ENCODE measurements at regions of chr11 and their contacts with region 1.

Region 1: GRCh38 chr11:102560555-102561011 is 30.0 kb upstream of the MMP7 start:
- DNase-seq: peak; percentile 70
- ATAC-seq: peak; percentile 53
- H3K4me3 ChIP-seq: peak overlapping the region in 4 of 5 experiments; percentile 30 to 67 (median 40)
- H3K4me3 Mint-ChIP-seq: peak overlapping the region; percentile 88
- H3K27ac ChIP-seq: peak overlapping the region; percentile 87 to 96
- H3K27ac Mint-ChIP-seq: peak overlapping the region; percentile 89
- H3K4me1 ChIP-seq: peaks cover 53 to 56% of the 10 kb centered on the region in 2 donors
- H3K4me1 Mint-ChIP-seq: peaks cover 54% of the 10 kb centered on the region
- H3K27me3 ChIP-seq: no peaks in the 10 kb centered on the region
- H3K27me3 Mint-ChIP-seq: no peaks in the 10 kb centered on the region
- CTCF ChIP-seq: no peak

Region 2: GRCh38 chr11:102592634-102593581 is 32.3 kb after region 1 on chr11:
- CTCF ChIA-PET with region 1: interaction called, 4 read pairs
- POLR2A ChIA-PET with region 1: no interaction called
- intact Hi-C with region 1: loop called (anchors 5 kb)
- DNase-seq: no peak
- ATAC-seq: no peak
- H3K4me3 ChIP-seq: no peak overlapping the region
- H3K4me3 Mint-ChIP-seq: no peak overlapping the region
- H3K27ac ChIP-seq: no peak overlapping the region
- H3K27ac Mint-ChIP-seq: no peak overlapping the region
- H3K4me1 ChIP-seq: peaks cover 26 to 29% of the 10 kb centered on the region in 2 donors
- H3K4me1 Mint-ChIP-seq: peaks cover 35% of the 10 kb centered on the region
- H3K27me3 ChIP-seq: no peaks in the 10 kb centered on the region
- H3K27me3 Mint-ChIP-seq: no peaks in the 10 kb centered on the region
- CTCF ChIP-seq: peak; percentile 55

Region 3: GRCh38 chr11:102603091-102603490 is 42.5 kb after region 1 on chr11:
- CTCF ChIA-PET with region 1: interaction called, 3 read pairs
- POLR2A ChIA-PET with region 1: no interaction called
- intact Hi-C with region 1: loop called (anchors 2 kb)
- DNase-seq: no peak
- ATAC-seq: no peak
- H3K4me3 ChIP-seq: no peak overlapping the region
- H3K4me3 Mint-ChIP-seq: no peak overlapping the region
- H3K27ac ChIP-seq: no peak overlapping the region
- H3K27ac Mint-ChIP-seq: no peak overlapping the region
- H3K4me1 ChIP-seq: no peaks in the 10 kb centered on the region
- H3K4me1 Mint-ChIP-seq: peaks cover 14% of the 10 kb centered on the region
- H3K27me3 ChIP-seq: no peaks in the 10 kb centered on the region
- H3K27me3 Mint-ChIP-seq: no peaks in the 10 kb centered on the region
- CTCF ChIP-seq: no peak

Region 4: GRCh38 chr11:102776454-102776853 is 215.9 kb after region 1 on chr11:
- CTCF ChIA-PET with region 1: no interaction called
- POLR2A ChIA-PET with region 1: no interaction called
- intact Hi-C with region 1: no loop called
- DNase-seq: no peak
- ATAC-seq: no peak
- H3K4me3 ChIP-seq: no peak overlapping the region
- H3K4me3 Mint-ChIP-seq: no peak overlapping the region
- H3K27ac ChIP-seq: no peak overlapping the region
- H3K27ac Mint-ChIP-seq: no peak overlapping the region
- H3K4me1 ChIP-seq: no peaks in the 10 kb centered on the region
- H3K4me1 Mint-ChIP-seq: no peaks in the 10 kb centered on the region
- H3K27me3 ChIP-seq: no peaks in the 10 kb centered on the region
- H3K27me3 Mint-ChIP-seq: peaks cover 21% of the 10 kb centered on the region
- CTCF ChIP-seq: no peak

Measured in B cell (primary cell).